Posterior cingulate gyrus (tissue), 11 donors: ENCODE measurements at regions of chr2 and their contacts with region 1.

Region 1: GRCh38 chr2:167964650-167965413 is 282.6 kb downstream of the STK39 start:
- DNase-seq: no peak

Region 2: GRCh38 chr2:167943897-167944296 is 20.9 kb before region 1 on chr2:
- intact Hi-C with region 1: loop called (anchors 1 kb)
- DNase-seq: no peak